ENCODE measurements at regions of chr1 and their contacts with region 1.

Region 1: DNA sequence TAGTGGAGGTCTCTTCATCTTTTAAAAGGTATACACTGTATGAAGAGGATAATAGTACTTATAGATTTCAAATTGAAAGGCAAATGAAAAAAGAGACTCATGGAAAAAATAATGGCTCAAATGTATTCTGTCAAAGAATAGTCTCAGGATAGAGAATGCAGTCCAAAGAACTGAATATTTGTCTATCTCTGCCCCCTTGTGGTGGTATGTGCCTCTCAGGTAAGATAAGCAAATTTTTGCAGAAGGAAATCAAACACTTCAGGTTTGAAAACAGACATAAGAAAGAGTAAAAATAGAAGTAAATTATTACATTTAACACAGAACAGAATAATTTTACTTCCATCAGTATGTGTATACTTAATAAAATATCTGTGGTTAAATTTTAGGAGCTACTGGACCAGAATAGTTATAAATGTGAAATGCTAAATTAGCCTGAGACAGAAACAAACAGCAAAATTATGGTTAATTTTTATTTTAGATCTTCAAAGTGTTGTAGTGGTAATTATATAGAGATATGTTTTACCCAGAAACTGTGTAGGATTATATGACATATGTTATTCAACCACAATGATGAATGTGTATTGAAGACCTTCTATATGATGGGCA is 164.4 kb upstream of the PALMD start:
- DNase-seq: peak; percentile 35
- H3K4me3 ChIP-seq: no peak overlapping the region
- H3K27ac ChIP-seq: no peak overlapping the region
- H3K4me1 ChIP-seq: no peaks in the 10 kb centered on the region
- H3K27me3 ChIP-seq: no peaks in the 10 kb centered on the region
- CTCF ChIP-seq: peak; percentile 72

Region 2: GRCh38 chr1:98794196-98794886 is 687.2 kb before region 1 on chr1:
- CTCF ChIA-PET with region 1: no interaction called
- dilution Hi-C with region 1: no loop called
- in situ Hi-C with region 1: no loop called
- intact Hi-C with region 1: loop called (anchors 1 kb)
- DNase-seq: peak; percentile 60
- H3K4me3 ChIP-seq: no peak overlapping the region
- H3K27ac ChIP-seq: no peak overlapping the region
- H3K4me1 ChIP-seq: no peaks in the 10 kb centered on the region
- H3K27me3 ChIP-seq: peaks cover 2% of the 10 kb centered on the region
- CTCF ChIP-seq: peak; percentile 78 to 82

Region 3: GRCh38 chr1:98884864-98885263 is 596.6 kb before region 1 on chr1:
- CTCF ChIA-PET with region 1: no interaction called
- dilution Hi-C with region 1: no loop called
- in situ Hi-C with region 1: no loop called
- intact Hi-C with region 1: loop called (anchors 2 kb)
- DNase-seq: no peak
- H3K4me3 ChIP-seq: no peak overlapping the region
- H3K27ac ChIP-seq: no peak overlapping the region
- H3K4me1 ChIP-seq: no peaks in the 10 kb centered on the region
- H3K27me3 ChIP-seq: no peaks in the 10 kb centered on the region
- CTCF ChIP-seq: no peak

Region 4: DNA sequence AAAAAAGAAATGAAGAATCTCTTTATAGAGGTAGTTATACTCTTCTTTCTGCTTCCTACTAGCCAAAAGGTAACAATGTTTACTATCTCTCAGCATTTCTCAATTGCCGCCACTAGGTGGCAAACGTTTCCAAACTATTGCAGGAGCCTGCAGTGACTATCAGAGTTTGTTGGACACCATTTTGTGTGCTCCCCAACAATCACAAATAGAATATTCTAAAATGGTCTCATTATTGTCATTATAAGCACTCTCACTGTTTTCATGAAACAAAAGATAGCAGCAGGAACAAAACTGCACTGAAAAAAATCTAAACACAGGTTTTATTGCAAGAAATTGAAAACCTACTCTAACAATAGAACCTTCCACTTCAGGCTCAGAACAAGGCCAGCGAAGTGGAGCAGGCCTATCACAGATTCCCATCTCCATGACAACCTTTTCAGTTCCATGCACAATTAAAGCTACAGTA is 301.1 kb before region 1 on chr1:
- CTCF ChIA-PET with region 1: no interaction called
- dilution Hi-C with region 1: no loop called
- in situ Hi-C with region 1: loop called in 1 of 2 experiments (anchors 25 kb)
- intact Hi-C with region 1: loop called (anchors 1 kb)
- DNase-seq: peak; percentile 62
- H3K4me3 ChIP-seq: no peak overlapping the region
- H3K27ac ChIP-seq: no peak overlapping the region
- H3K4me1 ChIP-seq: no peaks in the 10 kb centered on the region
- H3K27me3 ChIP-seq: no peaks in the 10 kb centered on the region
- CTCF ChIP-seq: peak; percentile 73 to 89

Region 5: DNA sequence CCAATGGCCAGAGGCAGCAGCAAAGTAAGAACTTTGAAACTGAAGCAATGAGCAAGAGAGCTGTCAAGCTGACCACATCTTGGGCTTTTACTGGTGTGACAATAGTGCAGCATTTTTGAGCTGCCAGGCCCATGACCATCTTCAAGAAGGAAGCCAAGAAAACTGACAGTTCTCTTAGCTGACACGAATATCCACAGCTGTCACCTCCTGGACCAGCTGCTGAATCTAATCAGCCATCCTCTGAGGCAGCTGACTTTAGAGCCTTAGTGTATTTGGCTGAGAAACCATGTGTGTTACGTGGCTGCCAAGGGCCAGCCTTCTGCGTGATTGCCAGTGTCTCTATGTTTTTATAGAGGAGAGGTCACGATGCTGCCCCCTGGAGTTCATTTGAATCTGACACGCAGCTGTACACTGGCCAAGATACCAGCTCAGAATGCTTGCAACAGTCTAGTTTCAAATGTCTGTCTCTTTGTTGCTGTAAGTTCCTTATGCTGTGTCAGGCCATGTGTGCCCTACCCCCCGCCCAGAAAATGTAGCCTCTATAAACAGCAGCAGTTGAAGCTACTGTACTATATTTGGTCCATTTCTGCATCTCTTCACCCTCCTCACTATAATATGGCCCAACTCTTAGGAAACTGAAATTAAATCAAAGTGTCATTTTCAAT is 204.2 kb after region 1 on chr1:
- CTCF ChIA-PET with region 1: no interaction called
- dilution Hi-C with region 1: no loop called
- in situ Hi-C with region 1: no loop called
- intact Hi-C with region 1: loop called (anchors 5 kb)
- DNase-seq: peak; percentile 73
- H3K4me3 ChIP-seq: no peak overlapping the region
- H3K27ac ChIP-seq: no peak overlapping the region
- H3K4me1 ChIP-seq: peaks cover 6% of the 10 kb centered on the region
- H3K27me3 ChIP-seq: no peaks in the 10 kb centered on the region
- CTCF ChIP-seq: peak; percentile 66